ENCODE measurements at regions of chr1 and their contacts with region 1.

Region 1: DNA sequence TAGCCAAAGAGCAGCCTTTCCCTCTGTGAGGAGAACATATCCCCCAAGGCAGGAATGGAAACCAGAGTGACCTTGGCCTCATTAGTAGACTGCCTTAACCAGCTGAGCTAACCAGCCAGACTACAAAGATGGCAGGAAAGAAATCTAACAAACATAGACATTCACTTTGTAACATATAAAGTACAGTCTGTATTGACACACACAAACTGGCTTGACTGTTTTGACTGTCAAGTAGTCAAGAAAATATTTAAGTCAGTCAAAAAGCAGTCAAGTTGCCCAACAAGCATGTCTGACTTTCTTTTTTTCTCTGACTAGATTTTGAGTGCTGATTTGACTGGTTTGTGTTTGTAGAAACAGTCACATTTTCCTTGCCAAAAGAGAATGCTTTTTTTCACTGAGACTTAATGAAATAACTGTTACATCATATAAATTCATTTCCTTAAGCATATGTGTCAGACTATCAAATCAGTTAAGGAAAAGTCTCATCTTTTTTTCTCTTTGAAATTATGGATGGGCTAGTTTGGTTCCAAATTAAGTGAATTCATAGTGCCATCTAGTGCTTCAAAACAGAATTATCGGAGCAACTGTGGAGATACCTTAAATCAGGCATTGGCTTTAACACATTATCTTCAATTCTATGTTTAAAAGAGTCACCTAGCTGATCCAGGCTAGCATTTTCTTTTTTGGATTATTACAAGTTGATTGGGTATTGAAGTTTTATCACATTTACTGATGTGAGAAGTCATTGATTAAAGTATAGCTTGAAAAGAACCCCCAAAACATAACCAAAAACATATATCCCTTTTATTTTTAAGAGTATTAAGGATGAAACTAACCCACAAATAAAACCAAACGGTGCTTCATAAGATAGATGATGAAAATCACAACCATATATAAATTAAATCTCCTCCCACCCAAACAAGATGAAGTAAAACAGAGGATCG is 75.0 kb downstream of the ATP6V1G3 start:
- DNase-seq: no peak
- ATAC-seq: peak; percentile 71
- H3K4me3 ChIP-seq: no peak overlapping the region
- H3K27ac ChIP-seq: no peak overlapping the region
- H3K4me1 ChIP-seq: no peaks in the 10 kb centered on the region
- H3K27me3 ChIP-seq: no peaks in the 10 kb centered on the region
- CTCF ChIP-seq: peak; percentile 44 to 76 (median 67)
- POLR2A ChIP-seq: no peak
- RAD21 ChIP-seq: peak; percentile 85

Region 2: DNA sequence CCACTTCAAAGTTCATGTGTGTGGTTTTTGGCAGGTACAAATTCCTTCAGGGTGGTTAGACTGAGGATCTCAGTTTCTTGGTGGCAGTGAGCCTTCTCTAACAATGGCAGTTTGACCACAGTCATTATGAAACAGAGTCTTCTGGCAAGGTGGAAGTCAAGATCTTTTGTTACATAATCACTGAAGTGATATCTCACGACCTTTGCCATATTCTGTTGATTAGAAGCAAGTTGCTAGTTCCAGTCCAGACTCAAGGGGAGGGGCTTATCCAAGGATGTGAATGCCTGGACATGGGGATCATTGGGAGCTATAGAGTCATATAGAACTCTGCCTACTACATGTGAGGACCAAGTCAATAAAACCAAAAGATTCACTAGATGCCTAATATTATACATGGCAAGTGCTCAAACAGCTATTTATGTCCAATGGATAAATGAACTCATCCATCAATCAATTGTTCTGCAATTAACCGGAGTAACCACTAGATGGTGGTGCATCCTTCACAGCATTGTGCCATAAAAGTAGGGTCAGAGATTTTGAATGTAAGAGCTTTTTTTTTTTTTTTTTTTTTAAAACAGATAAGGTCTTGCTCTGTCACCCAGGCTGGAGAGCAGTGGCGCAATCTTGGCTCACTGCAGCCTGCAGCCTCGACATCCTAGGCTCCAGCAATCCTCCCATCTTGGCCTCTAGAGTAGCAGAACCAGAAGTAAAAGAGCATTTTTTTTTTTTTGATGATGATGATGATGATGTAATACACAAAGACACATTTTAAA is 1065.5 kb before region 1 on chr1:
- CTCF ChIA-PET with region 1: no interaction called
- POLR2A ChIA-PET with region 1: no interaction called
- RAD21 ChIA-PET with region 1: no interaction called
- intact Hi-C with region 1: loop called (anchors 10 kb)
- DNase-seq: peak; percentile 74
- ATAC-seq: peak; percentile 84
- H3K4me3 ChIP-seq: no peak overlapping the region
- H3K27ac ChIP-seq: no peak overlapping the region
- H3K4me1 ChIP-seq: no peaks in the 10 kb centered on the region
- H3K27me3 ChIP-seq: no peaks in the 10 kb centered on the region
- CTCF ChIP-seq: peak; percentile 32 to 76 (median 68); a peak in 5 of 6 replicates
- POLR2A ChIP-seq: no peak
- RAD21 ChIP-seq: peak; percentile 61

Region 3: GRCh38 chr1:197614916-197615692 is 850.4 kb before region 1 on chr1:
- CTCF ChIA-PET with region 1: no interaction called
- POLR2A ChIA-PET with region 1: no interaction called
- RAD21 ChIA-PET with region 1: no interaction called
- intact Hi-C with region 1: loop called (anchors 5 kb)
- DNase-seq: peak; percentile 35
- ATAC-seq: peak; percentile 95
- H3K4me3 ChIP-seq: no peak overlapping the region
- H3K27ac ChIP-seq: no peak overlapping the region
- H3K4me1 ChIP-seq: no peaks in the 10 kb centered on the region
- H3K27me3 ChIP-seq: no peaks in the 10 kb centered on the region
- CTCF ChIP-seq: peak; percentile 47 to 66 (median 65); a peak in 5 of 6 replicates
- POLR2A ChIP-seq: no peak
- RAD21 ChIP-seq: peak; percentile 61

Region 4: GRCh38 chr1:198072177-198072576 is 393.3 kb before region 1 on chr1:
- CTCF ChIA-PET with region 1: no interaction called
- POLR2A ChIA-PET with region 1: no interaction called
- RAD21 ChIA-PET with region 1: no interaction called
- intact Hi-C with region 1: loop called (anchors 5 kb)
- DNase-seq: no peak
- ATAC-seq: peak; percentile 62
- H3K4me3 ChIP-seq: no peak overlapping the region
- H3K27ac ChIP-seq: no peak overlapping the region
- H3K4me1 ChIP-seq: no peaks in the 10 kb centered on the region
- H3K27me3 ChIP-seq: no peaks in the 10 kb centered on the region
- CTCF ChIP-seq: peak; percentile 10 to 25 (median 21); a peak in 3 of 6 replicates
- POLR2A ChIP-seq: no peak
- RAD21 ChIP-seq: peak; percentile 52

Region 5: GRCh38 chr1:198205016-198205684 is 260.3 kb before region 1 on chr1:
- CTCF ChIA-PET with region 1: no interaction called
- POLR2A ChIA-PET with region 1: no interaction called
- RAD21 ChIA-PET with region 1: no interaction called
- intact Hi-C with region 1: loop called (anchors 5 kb)
- DNase-seq: no peak
- ATAC-seq: no peak
- H3K4me3 ChIP-seq: no peak overlapping the region
- H3K27ac ChIP-seq: no peak overlapping the region
- H3K4me1 ChIP-seq: no peaks in the 10 kb centered on the region
- H3K27me3 ChIP-seq: no peaks in the 10 kb centered on the region
- CTCF ChIP-seq: no peak
- POLR2A ChIP-seq: no peak
- RAD21 ChIP-seq: no peak